ENCODE measurements at regions of chr21 and their contacts with region 1.

Region 1: DNA sequence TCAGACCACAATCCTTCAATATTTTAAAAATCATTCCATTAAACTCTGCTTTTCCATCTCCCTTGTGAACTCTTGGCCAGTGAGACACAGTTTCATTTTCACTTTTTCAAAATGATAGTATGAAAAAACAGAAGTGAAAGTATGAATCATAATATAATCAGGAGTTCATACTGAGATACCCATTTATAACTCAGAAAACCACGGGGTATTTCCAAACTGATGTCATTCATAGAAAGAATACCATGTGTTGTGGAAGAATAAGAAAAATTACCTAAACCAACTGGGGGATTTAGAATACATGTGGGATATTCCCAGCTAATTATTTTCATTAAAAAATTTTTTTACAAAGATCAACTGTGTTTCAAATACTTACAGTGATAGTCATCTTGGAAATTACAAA is 149.9 kb downstream of the MRPL39 start:
- DNase-seq: peak in 4 of 5 donors; percentile 46 to 69 (median 61)
- H3K4me3 ChIP-seq: no peak overlapping the region
- H3K4me3 Mint-ChIP-seq: peak overlapping the region; percentile 72 to 93 (median 85)
- H3K27ac ChIP-seq: peak overlapping the region; percentile 57
- H3K27ac Mint-ChIP-seq: peak overlapping the region; percentile 54 to 98 (median 94)
- H3K4me1 ChIP-seq: peaks cover 10% of the 10 kb centered on the region
- H3K4me1 Mint-ChIP-seq: peaks cover 17 to 23% (median 20%) of the 10 kb centered on the region in 4 donors
- H3K27me3 ChIP-seq: no peaks in the 10 kb centered on the region
- H3K27me3 Mint-ChIP-seq: no peaks in the 10 kb centered on the region

Region 2: GRCh38 chr21:25734904-25735645 is 277.7 kb after region 1 on chr21 and contains the starts of genes ATP5PF and GABPA:
- CTCF ChIA-PET with region 1: no interaction called
- POLR2A ChIA-PET with region 1: interaction called, 3 read pairs
- intact Hi-C with region 1: loop called (anchors 2 kb)
- DNase-seq: peak; percentile 96 to 98 (median 98)
- H3K4me3 ChIP-seq: peak within 1 kb of the TSS; percentile 77 to 93
- H3K4me3 Mint-ChIP-seq: peak within 1 kb of the TSS; percentile 99 to 100 (median 100)
- H3K27ac ChIP-seq: peak within 1 kb of the TSS; percentile 91
- H3K27ac Mint-ChIP-seq: peak within 1 kb of the TSS; percentile 99 to 100 (median 100)
- H3K4me1 ChIP-seq: peaks cover 52% of the 10 kb centered on the region
- H3K4me1 Mint-ChIP-seq: peaks cover 38 to 71% (median 53%) of the 10 kb centered on the region in 4 donors
- H3K27me3 ChIP-seq: no peaks in the 10 kb centered on the region
- H3K27me3 Mint-ChIP-seq: peaks cover 3 to 4% of the 10 kb centered on the region in 2 donors
- total RNA-seq, gene ATP5PF: 56.6 to 64.1 TPM
- total RNA-seq, gene GABPA: 28.4 to 29.4 TPM